ENCODE measurements at regions of chr3 and their contacts with region 1.

Region 1: GRCh38 chr3:179624451-179624850 is 19.9 kb downstream of the NDUFB5 start:
- DNase-seq: no peak
- H3K4me3 ChIP-seq: no peak overlapping the region
- H3K27ac ChIP-seq: no peak overlapping the region
- H3K4me1 ChIP-seq: no peaks in the 10 kb centered on the region
- H3K27me3 ChIP-seq: no peaks in the 10 kb centered on the region
- CTCF ChIP-seq: no peak

Region 2: DNA sequence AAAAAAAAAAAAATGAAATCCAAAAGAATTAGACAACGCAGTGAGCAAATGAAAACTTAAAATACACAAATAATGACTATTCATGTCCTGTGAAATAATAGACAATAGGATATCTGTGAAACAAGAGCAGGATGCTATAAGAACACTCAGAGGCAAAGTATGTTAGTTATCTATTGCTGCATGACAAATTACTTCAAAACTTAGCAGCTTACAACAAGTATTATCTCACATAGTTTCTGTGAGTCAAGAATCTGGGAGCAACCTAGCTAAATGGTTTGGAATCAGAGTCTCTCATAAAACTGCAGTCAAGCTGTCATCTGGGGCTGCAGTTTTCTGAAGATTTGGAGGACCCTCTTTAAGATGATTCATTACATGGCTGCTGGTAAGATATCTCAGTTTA is 516.4 kb before region 1 on chr3:
- CTCF ChIA-PET with region 1: no interaction called
- POLR2A ChIA-PET with region 1: interaction called, 14 read pairs
- intact Hi-C with region 1: no loop called
- DNase-seq: no peak
- H3K4me3 ChIP-seq: no peak overlapping the region
- H3K27ac ChIP-seq: no peak overlapping the region
- H3K4me1 ChIP-seq: no peaks in the 10 kb centered on the region
- H3K27me3 ChIP-seq: no peaks in the 10 kb centered on the region
- CTCF ChIP-seq: no peak

Region 3: GRCh38 chr3:179196098-179196497 is 428.4 kb before region 1 on chr3:
- CTCF ChIA-PET with region 1: no interaction called
- POLR2A ChIA-PET with region 1: no interaction called
- intact Hi-C with region 1: no loop called
- DNase-seq: peak; percentile 14
- H3K4me3 ChIP-seq: no peak overlapping the region
- H3K27ac ChIP-seq: no peak overlapping the region
- H3K4me1 ChIP-seq: no peaks in the 10 kb centered on the region
- H3K27me3 ChIP-seq: no peaks in the 10 kb centered on the region
- CTCF ChIP-seq: no peak

Region 4: GRCh38 chr3:179860275-179861107 is 236.0 kb after region 1 on chr3:
- CTCF ChIA-PET with region 1: no interaction called
- POLR2A ChIA-PET with region 1: no interaction called
- intact Hi-C with region 1: no loop called
- DNase-seq: no peak
- H3K4me3 ChIP-seq: no peak overlapping the region
- H3K27ac ChIP-seq: no peak overlapping the region
- H3K4me1 ChIP-seq: peaks cover 4% of the 10 kb centered on the region
- H3K27me3 ChIP-seq: no peaks in the 10 kb centered on the region
- CTCF ChIP-seq: no peak

Measured in A673 (cell line).